Right lobe of liver (tissue), 6 donors: ENCODE measurements at regions of chr1 and their contacts with region 1.

Region 1: GRCh38 chr1:38029685-38030511 is 16.7 kb downstream of the POU3F1 start:
- DNase-seq: no peak
- ATAC-seq: peak; percentile 39 to 67 (median 44)
- H3K4me3 ChIP-seq: no peak overlapping the region
- H3K27ac ChIP-seq: no peak overlapping the region
- H3K4me1 ChIP-seq: no peaks in the 10 kb centered on the region
- H3K27me3 ChIP-seq: no peaks in the 10 kb centered on the region
- CTCF ChIP-seq: no peak
- POLR2A ChIP-seq: no peak

Region 2: DNA sequence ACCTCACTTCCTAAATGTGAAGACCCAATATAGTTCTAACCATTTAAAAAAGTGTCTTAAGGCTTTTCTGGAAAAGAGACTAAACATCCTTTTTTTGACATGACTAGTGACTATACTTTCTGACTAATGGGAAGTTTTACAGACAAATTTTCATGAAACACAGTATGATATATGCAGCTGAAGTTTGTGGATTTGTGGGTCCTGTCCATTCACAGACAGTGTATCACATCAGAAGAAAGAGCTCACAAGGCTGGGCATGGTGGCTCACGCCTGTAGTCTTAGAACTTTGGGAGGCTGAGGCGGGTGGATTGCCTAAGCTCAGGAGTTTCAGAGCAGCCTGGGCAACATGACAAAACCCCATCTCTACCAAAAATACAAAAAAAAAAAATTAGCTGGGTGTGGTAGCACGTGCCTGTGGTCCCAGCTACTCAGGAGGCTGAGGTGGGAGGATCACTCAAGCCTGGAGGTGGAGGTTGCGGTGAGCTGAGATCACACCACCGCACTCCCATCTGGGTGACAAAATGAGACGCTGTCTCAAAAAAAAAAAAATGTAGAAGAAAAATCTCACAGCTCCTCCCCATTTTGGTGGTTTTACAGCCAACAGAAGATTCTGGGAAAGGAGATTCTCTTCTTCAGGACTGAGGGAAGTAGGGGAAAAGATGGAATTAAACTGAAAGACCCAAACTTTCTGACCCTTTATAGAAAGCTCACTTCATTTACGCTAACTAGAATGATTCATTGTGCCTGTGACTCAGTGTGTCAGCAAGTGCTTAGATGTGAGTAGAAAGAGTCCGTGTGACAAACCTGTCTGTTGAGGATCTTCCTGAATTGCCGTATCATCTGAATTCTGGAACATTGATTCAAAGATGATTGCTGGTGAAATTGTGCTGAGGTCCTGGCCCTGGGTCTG is 206.7 kb before region 1 on chr1:
- intact Hi-C with region 1: no loop called
- DNase-seq: no peak
- ATAC-seq: no peak
- H3K4me3 ChIP-seq: no peak overlapping the region
- H3K27ac ChIP-seq: no peak overlapping the region
- H3K4me1 ChIP-seq: no peaks in the 10 kb centered on the region
- H3K27me3 ChIP-seq: no peaks in the 10 kb centered on the region
- CTCF ChIP-seq: no peak
- POLR2A ChIP-seq: no peak

Region 3: DNA sequence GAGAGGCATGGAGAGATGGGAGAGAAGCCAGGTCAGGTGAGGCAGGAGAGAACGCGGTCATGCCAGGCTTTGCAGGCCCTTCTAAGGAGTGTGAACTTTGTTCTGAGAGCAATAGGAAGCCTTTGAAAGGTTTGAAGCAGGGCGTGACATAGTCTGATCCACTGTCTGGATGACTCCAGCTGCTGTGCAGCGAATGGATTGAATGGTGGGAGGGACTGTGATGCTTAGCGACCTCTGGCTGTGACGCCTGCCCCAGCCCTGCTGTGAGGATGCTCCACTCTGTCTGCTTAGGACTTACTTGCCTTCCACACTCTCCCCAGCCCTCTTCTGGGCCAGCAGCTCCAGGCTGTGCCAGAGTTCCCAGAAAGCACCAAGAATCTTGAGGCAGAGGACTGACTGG is 58.5 kb after region 1 on chr1:
- intact Hi-C with region 1: no loop called
- DNase-seq: no peak
- ATAC-seq: no peak
- H3K4me3 ChIP-seq: no peak overlapping the region
- H3K27ac ChIP-seq: no peak overlapping the region
- H3K4me1 ChIP-seq: peaks cover 0 to 24% (median 9%) of the 10 kb centered on the region in 4 donors
- H3K27me3 ChIP-seq: no peaks in the 10 kb centered on the region
- CTCF ChIP-seq: no peak
- POLR2A ChIP-seq: no peak

Region 4: GRCh38 chr1:38826262-38826661 is 796.4 kb after region 1 on chr1:
- intact Hi-C with region 1: loop called in 1 of 2 experiments (anchors 10 kb)
- DNase-seq: no peak
- ATAC-seq: no peak
- H3K4me3 ChIP-seq: no peak overlapping the region
- H3K27ac ChIP-seq: no peak overlapping the region
- H3K4me1 ChIP-seq: no peaks in the 10 kb centered on the region
- H3K27me3 ChIP-seq: no peaks in the 10 kb centered on the region
- CTCF ChIP-seq: no peak
- POLR2A ChIP-seq: no peak